ENCODE measurements at regions of chr3 and their contacts with region 1.

Region 1: GRCh38 chr3:172476347-172476746 is 28.1 kb upstream of the GHSR start:
- DNase-seq: no peak
- CTCF ChIP-seq: no peak

Region 2: GRCh38 chr3:171703756-171704401 is 772.5 kb before region 1 on chr3:
- in situ Hi-C with region 1: no loop called
- DNase-seq: no peak
- CTCF ChIP-seq: peak; percentile 39

Region 3: GRCh38 chr3:172595641-172596393 is 119.5 kb after region 1 on chr3:
- in situ Hi-C with region 1: loop called (anchors 10 kb)
- DNase-seq: peak; percentile 76
- CTCF ChIP-seq: peak; percentile 64

Measured in GM13976 (cell line).